IMR-90 (cell line): ENCODE measurements at regions of chr2 and their contacts with region 1.

Region 1: DNA sequence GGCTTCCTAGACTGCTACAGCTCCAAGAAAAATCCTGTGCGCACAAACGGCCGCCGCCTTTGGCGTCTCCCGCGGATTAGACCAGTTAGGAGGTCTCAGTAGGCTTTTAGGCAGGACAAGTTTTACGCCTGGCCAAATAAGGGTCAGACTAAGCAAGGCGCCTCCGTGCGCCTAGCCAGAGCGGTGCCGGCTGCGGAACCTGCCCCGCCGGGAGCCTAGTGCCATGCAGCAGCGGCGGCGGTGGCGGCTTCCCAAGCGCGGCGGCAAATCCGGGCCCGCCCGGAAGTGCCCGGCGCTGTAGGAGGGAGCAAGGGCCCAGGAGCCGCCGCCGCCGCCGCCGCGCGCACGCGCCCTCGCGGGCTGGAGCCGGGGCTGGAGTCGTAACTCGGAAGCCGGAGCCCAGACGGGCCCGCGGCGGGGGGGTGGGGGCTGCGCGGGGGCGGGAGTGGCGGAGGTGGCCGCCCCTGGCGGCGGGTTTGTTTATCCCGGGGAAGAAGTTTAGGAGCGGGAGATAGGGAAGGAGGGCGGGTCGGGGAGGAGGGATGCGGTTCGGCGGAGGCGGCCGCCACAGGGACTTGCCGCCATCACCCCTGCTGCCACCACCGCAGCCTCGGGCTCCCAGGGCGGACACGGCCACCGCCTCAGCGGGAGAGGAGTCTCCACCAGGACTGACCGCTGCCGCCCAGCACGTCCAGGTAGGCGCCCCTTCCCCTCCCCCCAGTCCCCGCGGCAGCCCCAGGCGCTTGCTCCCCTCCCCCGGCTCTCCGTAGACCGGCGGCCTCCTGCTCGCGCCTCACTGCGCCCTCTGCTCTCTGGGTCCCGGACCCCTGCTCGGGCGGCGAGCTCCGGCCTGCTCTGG is at the start of gene SPOPL:
- DNase-seq: peak; percentile 74
- ATAC-seq: peak; percentile 96
- H3K4me3 ChIP-seq: peak within 1 kb of the TSS; percentile 97
- H3K27ac ChIP-seq: peak within 1 kb of the TSS; percentile 89
- H3K4me1 ChIP-seq: no peaks in the 10 kb centered on the region
- H3K27me3 ChIP-seq: no peaks in the 10 kb centered on the region
- CTCF ChIP-seq: no peak
- POLR2A ChIP-seq: peak; percentile 77
- RAD21 ChIP-seq: no peak
- total RNA-seq, gene SPOPL: 16.7 and 20.3 TPM in 2 replicates

Region 2: GRCh38 chr2:137969418-137969765 is 532.3 kb before region 1 on chr2:
- CTCF ChIA-PET with region 1: no interaction called
- POLR2A ChIA-PET with region 1: no interaction called
- dilution Hi-C with region 1: no loop called
- in situ Hi-C with region 1: no loop called
- intact Hi-C with region 1: loop called (anchors 5 kb)
- DNase-seq: peak; percentile 95
- ATAC-seq: peak; percentile 54
- H3K4me3 ChIP-seq: no peak overlapping the region
- H3K27ac ChIP-seq: no peak overlapping the region
- H3K4me1 ChIP-seq: peaks cover 5% of the 10 kb centered on the region
- H3K27me3 ChIP-seq: no peaks in the 10 kb centered on the region
- CTCF ChIP-seq: no peak
- POLR2A ChIP-seq: no peak
- RAD21 ChIP-seq: no peak

Region 3: DNA sequence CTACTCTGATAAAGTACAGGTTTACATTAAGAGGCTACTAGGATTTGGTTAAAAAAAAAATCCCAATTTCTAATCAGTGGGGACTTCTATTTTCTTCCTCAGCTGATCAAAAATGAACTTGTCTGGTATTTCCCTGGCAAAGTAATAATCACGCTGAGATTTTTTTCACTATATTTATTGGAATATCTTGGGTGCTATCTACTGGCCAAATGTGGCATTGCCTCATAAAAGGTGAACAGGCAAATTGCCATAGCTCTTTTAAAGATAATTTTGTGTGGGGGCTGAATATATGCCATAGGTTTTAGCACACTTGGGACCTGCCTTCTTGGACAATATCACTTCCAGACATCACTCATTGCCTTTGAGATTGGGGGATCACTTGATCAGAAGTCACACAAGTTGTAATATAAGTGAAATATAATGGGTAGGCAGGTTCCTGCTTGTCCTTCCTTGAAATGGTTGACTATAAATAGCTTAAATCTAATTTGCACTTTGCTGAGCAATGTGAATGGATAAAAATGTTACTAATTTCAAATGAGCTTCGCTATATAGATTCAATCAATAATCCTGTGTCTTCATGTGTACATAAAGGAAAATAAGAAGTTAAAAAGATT is 285.5 kb after region 1 on chr2:
- CTCF ChIA-PET with region 1: no interaction called
- POLR2A ChIA-PET with region 1: no interaction called
- dilution Hi-C with region 1: no loop called
- in situ Hi-C with region 1: no loop called
- intact Hi-C with region 1: loop called (anchors 5 kb)
- DNase-seq: peak; percentile 37
- ATAC-seq: peak; percentile 44; the same call in 1 of the 2 replicates
- H3K4me3 ChIP-seq: no peak overlapping the region
- H3K27ac ChIP-seq: no peak overlapping the region
- H3K4me1 ChIP-seq: no peaks in the 10 kb centered on the region
- H3K27me3 ChIP-seq: peaks cover 2% of the 10 kb centered on the region; the same call in 1 of the 2 replicates
- CTCF ChIP-seq: peak; percentile 68
- POLR2A ChIP-seq: no peak
- RAD21 ChIP-seq: peak; percentile 64